AG04450 (cell line): ENCODE measurements at regions of chr12 and their contacts with region 1.

Region 1: DNA sequence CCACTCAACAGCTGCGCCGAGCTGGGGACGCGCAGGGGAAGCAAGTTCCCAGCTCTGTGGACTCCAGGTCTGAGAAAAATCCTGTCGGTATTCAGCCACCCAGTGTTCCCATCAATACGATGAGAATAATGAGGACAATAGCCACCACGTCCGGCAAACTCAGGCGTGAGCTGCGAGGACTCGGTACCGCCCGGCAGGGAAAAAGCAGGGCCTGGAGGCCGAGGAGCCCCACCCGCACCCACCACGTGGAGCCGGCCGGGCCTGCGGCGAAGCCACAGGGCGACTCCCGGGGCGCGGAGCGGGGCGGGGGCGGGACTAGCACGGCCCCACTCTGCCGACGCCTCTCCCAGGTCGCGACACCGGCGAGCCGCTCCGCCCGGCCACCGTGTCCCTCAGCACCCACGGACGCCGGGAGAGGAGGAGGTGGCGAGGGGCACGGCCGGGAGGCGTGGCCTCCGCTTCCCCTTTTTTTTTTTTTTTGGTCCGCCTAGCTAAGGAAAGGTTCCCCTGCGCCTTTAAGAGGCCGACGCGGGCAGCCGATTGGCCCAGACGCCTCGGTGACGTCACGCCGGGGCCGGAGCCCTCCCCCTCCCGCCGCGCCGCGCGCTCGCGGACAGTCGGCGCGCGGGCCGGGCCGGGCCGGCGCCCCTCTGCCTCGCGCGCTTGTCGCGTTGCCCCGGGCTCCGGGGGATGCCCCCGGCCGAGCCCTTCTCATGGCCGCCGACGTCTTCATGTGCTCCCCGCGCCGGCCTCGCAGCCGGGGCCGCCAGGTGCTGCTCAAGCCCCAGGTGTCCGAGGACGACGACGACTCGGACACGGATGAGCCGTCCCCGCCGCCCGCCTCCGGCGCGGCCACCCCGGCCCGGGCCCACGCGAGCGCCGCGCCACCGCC is at the start of gene MLXIP:
- DNase-seq: no peak
- H3K4me3 ChIP-seq: peak within 1 kb of the TSS; percentile 89
- H3K27ac ChIP-seq: peak within 1 kb of the TSS; percentile 1
- H3K27me3 ChIP-seq: peaks cover 2% of the 10 kb centered on the region
- CTCF ChIP-seq: no peak
- polyA plus RNA-seq, gene MLXIP: 5.8 and 8.4 TPM in 2 replicates

Region 2: GRCh38 chr12:122051231-122051876 is 27.0 kb before region 1 on chr12:
- CTCF ChIA-PET with region 1: interaction called, 7 read pairs
- POLR2A ChIA-PET with region 1: interaction called, 11 read pairs
- DNase-seq: no peak
- H3K4me3 ChIP-seq: no peak overlapping the region
- H3K27ac ChIP-seq: peak overlapping the region; percentile 47
- H3K27me3 ChIP-seq: no peaks in the 10 kb centered on the region
- CTCF ChIP-seq: no peak

Region 3: GRCh38 chr12:122064025-122064777 is 14.2 kb before region 1 on chr12:
- CTCF ChIA-PET with region 1: interaction called, 3 read pairs
- POLR2A ChIA-PET with region 1: interaction called, 17 read pairs
- DNase-seq: no peak
- H3K4me3 ChIP-seq: no peak overlapping the region
- H3K27ac ChIP-seq: peak overlapping the region; percentile 79
- H3K27me3 ChIP-seq: no peaks in the 10 kb centered on the region
- CTCF ChIP-seq: peak; percentile 47

Region 4: GRCh38 chr12:122090759-122091515 is 12.6 kb after region 1 on chr12:
- CTCF ChIA-PET with region 1: interaction called, 3 read pairs
- POLR2A ChIA-PET with region 1: interaction called, 34 read pairs
- DNase-seq: peak; percentile 90
- H3K4me3 ChIP-seq: no peak overlapping the region
- H3K27ac ChIP-seq: peak overlapping the region; percentile 95
- H3K27me3 ChIP-seq: no peaks in the 10 kb centered on the region
- CTCF ChIP-seq: no peak

Region 5: DNA sequence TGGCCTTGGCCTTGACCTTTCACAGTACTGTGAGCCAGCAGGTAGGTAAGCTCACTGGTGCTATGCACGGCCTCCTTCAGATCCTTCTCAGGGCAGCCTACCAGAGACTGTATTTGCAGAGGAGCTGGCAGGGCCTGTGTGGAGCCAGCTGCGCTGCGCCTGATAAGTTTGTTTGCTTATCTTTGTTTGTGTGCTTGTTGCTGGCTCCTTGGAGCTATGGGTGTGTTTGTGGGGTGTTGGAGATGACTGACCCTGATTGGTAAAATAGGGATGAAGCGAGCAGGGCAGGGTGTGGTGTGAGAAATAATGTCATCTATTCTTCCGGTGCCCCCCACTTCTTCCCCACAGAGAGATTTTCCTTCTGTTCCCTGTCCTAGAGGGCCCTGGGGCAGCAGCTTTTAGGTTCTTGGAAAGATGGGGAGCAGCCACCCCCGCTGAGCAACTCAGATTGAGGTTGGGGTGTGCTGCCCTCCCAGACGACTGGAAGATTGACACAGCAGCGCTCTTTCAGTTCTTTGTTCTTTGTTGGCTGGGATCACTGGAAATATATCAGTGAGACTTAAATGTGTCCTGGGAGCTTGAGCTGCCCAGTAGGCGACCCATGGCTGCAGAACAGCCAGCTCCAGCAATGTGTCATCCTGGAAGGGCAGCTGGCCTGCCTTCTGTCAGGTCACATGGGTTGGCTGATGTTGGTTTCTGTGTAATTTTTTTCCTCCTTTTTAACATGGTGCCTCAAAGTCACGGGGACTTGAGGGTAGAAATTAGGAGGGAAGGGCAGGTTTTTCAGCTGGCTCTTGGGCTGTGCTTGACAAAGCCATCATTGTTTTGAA is 19.8 kb after region 1 on chr12:
- CTCF ChIA-PET with region 1: no interaction called
- POLR2A ChIA-PET with region 1: interaction called, 34 read pairs
- DNase-seq: no peak
- H3K4me3 ChIP-seq: no peak overlapping the region
- H3K27ac ChIP-seq: peak overlapping the region; percentile 52
- H3K27me3 ChIP-seq: no peaks in the 10 kb centered on the region
- CTCF ChIP-seq: no peak

Region 6: GRCh38 chr12:122123051-122123760 is 44.8 kb after region 1 on chr12:
- CTCF ChIA-PET with region 1: interaction called, 18 read pairs
- POLR2A ChIA-PET with region 1: interaction called, 3 read pairs
- DNase-seq: no peak
- H3K4me3 ChIP-seq: no peak overlapping the region
- H3K27ac ChIP-seq: no peak overlapping the region
- H3K27me3 ChIP-seq: no peaks in the 10 kb centered on the region
- CTCF ChIP-seq: peak; percentile 77